Activated B cell treated with CpG ODN at 0.5 μM for 24 hours (primary cell): ENCODE measurements at regions of chr1 and their contacts with region 1.

Region 1: GRCh38 chr1:17125756-17126237 is 6.5 kb upstream of the PADI2 start:
- DNase-seq: peak; percentile 84
- ATAC-seq: peak; percentile 79
- H3K4me3 Mint-ChIP-seq: no peak overlapping the region
- H3K27ac Mint-ChIP-seq: peak overlapping the region; percentile 18
- H3K4me1 Mint-ChIP-seq: peaks cover 38% of the 10 kb centered on the region
- H3K27me3 Mint-ChIP-seq: no peaks in the 10 kb centered on the region
- CTCF ChIP-seq: peak; percentile 81

Region 2: DNA sequence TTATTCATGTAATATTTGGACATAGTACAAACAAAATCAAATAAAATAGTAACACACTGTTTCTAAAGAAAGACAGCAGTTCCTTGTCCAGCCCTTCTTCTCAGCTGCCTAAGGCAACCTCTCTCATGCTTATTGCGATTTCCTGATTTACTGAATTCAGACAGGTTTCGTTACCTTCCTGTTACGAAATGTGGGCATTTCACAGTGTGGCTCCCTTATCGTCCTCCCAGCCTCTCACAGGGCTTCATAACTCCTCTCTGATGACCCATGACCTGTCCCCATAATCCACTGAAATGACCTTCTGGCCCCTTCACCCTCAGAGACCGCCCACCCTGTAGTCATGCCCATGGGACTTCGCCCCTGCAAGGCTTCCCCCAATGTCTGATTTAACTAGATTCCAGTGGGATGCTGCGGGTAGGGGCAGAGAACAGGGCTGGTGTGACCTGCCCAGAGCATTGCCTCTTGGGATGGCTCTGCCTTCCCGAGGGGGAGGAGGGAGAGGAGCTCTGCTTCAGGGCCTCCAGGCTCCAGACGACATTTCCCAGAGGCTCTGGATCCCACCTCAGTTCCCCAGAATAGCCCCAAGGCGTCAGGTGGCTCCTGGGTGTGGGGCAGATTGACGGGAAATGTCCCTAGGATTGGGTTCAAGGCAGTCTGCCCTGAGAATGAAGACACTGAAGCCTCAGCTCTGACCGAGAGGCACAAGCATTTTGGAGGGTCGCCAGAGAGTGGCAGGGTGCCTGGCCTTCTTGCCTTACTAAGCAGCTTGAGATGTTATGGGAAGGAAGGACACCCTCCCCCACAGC is 27.1 kb before region 1 on chr1:
- CTCF ChIA-PET with region 1: no interaction called
- POLR2A ChIA-PET with region 1: no interaction called
- intact Hi-C with region 1: no loop called
- DNase-seq: no peak
- ATAC-seq: no peak
- H3K4me3 Mint-ChIP-seq: no peak overlapping the region
- H3K27ac Mint-ChIP-seq: no peak overlapping the region
- H3K4me1 Mint-ChIP-seq: no peaks in the 10 kb centered on the region
- H3K27me3 Mint-ChIP-seq: peaks cover 8% of the 10 kb centered on the region
- CTCF ChIP-seq: no peak

Region 3: DNA sequence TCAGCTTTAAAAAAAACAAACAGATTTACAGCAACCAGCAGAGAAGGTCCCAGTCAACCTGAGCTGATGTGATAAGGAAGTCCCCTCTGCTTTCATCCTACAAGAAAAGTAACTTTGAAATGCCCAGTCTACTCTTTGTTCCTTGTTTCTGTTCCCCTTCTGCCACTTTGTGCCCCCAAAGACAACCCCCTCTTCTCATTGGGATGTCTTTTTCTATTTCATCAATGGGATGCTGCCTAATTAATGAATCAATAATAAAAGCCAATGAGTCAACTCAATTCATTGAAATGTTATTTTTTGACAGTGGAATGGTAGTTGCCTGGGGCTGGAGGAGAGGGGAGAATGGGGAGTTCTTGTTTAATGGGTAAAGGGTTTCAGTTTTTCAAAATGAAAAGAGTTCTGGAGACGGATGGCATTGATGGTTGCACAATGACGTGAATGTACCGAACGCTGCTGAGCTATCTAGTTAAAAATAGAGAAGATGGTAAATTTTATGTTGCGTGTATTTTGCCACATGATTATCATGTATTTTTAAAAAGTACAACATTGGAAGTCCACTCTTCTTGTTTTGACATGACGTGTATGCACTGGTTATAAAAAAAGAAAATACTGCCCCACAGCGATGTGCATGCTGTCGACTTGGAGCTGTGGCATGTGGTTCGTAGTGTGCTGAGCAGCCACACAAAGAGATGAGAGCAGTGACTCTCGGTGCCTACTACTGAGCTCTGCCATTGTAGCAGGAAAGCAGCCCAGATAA is 15.8 kb after region 1 on chr1:
- CTCF ChIA-PET with region 1: interaction called, 18 read pairs
- POLR2A ChIA-PET with region 1: interaction called, 98 read pairs
- intact Hi-C with region 1: loop called (anchors 1 kb)
- DNase-seq: no peak
- ATAC-seq: peak; percentile 78
- H3K4me3 Mint-ChIP-seq: peak overlapping the region; percentile 72
- H3K27ac Mint-ChIP-seq: peak overlapping the region; percentile 94
- H3K4me1 Mint-ChIP-seq: peaks cover 33% of the 10 kb centered on the region
- H3K27me3 Mint-ChIP-seq: no peaks in the 10 kb centered on the region
- CTCF ChIP-seq: no peak

Region 4: DNA sequence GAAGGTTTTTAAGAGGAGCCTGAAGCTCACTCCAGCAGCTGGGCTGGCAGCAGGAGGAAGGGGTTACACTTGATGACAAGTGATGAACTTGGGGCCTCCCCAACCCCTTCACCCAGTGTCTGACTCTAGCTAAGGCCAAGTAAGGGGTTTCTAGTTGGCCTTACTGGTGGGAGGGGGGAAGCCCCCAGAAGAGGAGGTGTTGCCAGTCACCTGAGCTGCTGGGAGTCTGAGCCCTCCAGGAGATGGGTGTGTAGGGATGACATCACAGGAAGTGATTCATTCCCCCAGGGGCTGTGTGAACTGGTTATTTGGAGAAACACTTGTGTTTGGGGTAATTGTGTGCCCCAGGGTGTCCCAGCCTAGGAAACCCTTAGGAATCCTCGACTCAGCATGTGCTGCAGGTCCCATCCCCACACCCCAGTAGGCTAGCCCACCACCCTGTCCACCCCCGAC is 82.2 kb after region 1 on chr1:
- CTCF ChIA-PET with region 1: interaction called, 8 read pairs
- POLR2A ChIA-PET with region 1: interaction called, 12 read pairs
- intact Hi-C with region 1: loop called (anchors 2 kb)
- DNase-seq: peak; percentile 43
- ATAC-seq: peak; percentile 83
- H3K4me3 Mint-ChIP-seq: peak overlapping the region; percentile 42
- H3K27ac Mint-ChIP-seq: peak overlapping the region; percentile 64
- H3K4me1 Mint-ChIP-seq: peaks cover 30% of the 10 kb centered on the region
- H3K27me3 Mint-ChIP-seq: peaks cover 5% of the 10 kb centered on the region
- CTCF ChIP-seq: no peak

Region 5: DNA sequence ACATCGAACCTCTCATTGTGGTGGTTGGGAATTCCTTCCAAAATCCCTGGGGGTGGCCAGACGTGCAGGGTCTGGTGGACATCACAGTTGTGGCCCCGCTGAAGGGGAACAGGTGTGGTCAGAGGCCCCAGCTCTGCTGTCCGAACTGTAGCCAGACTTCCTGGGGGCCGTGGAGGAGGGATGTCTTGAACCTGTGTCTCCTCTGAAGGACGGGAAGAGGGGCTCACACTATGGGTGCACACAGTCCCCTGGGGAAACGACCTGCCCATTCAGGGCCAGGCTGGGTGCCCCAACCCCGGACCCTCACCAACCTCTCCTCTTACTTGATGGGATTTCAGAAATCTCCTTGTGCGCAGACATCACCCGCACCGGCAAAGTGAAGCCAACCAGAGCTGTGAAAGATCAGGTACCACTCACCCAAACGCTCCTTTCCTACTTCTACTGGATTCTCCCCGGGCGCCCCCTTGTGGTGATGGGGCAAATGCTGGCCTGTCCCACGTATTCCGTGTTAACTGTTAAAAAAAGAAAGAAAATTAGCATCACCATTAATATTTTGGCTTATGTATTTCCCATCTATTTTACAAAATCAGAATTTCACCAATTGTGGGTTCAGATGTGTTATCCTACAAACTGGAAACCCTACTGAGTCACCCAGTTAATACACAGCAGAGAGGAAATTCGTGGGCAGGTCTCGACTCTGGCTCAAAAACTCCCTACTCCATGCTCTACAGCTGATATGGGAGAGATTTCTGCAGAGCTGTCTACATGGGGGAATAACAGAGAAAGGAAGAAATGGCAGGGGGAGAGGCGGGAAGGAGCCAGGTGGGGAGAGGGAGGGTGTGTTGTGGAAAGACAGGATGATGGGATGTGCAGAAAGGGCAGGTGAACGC is 210.3 kb after region 1 on chr1:
- CTCF ChIA-PET with region 1: interaction called, 23 read pairs
- POLR2A ChIA-PET with region 1: no interaction called
- intact Hi-C with region 1: loop called (anchors 1 kb)
- DNase-seq: peak; percentile 61
- ATAC-seq: no peak
- H3K4me3 Mint-ChIP-seq: no peak overlapping the region
- H3K27ac Mint-ChIP-seq: no peak overlapping the region
- H3K4me1 Mint-ChIP-seq: no peaks in the 10 kb centered on the region
- H3K27me3 Mint-ChIP-seq: peaks cover 19% of the 10 kb centered on the region
- CTCF ChIP-seq: peak; percentile 82

Region 6: DNA sequence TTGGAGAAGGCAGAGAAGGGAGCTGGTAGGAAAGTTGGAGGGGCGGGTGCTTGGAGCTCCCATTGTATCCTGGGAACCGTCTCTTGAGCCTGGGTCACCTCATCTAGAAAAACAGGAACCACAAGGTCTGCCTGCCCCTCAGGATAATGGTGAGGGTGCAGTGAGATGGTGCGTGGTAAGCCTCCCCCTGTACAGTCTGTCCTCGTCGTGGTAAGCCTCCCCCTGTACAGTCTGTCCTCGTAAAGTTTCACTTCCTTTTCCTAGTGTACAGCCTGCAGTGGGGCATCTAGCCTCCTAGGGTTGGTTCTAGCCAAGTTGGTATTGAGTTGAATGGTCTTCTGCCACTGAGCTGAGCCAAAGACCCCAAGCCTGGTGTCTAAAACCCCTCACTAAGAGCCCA is 915.3 kb after region 1 on chr1:
- CTCF ChIA-PET with region 1: no interaction called
- POLR2A ChIA-PET with region 1: no interaction called
- intact Hi-C with region 1: no loop called
- DNase-seq: peak; percentile 15
- ATAC-seq: peak; percentile 91
- H3K4me3 Mint-ChIP-seq: no peak overlapping the region
- H3K27ac Mint-ChIP-seq: no peak overlapping the region
- H3K4me1 Mint-ChIP-seq: peaks cover 39% of the 10 kb centered on the region
- H3K27me3 Mint-ChIP-seq: peaks cover 15% of the 10 kb centered on the region
- CTCF ChIP-seq: no peak